Panc1 (cell line): ENCODE measurements at regions of chr18 and their contacts with region 1.

Region 1: GRCh38 chr18:25531207-25531606 is 179.2 kb upstream of the ZNF521 start:
- DNase-seq: no peak
- ATAC-seq: no peak
- H3K4me3 ChIP-seq: no peak overlapping the region
- H3K27ac ChIP-seq: no peak overlapping the region
- H3K4me1 ChIP-seq: no peaks in the 10 kb centered on the region
- H3K27me3 ChIP-seq: no peaks in the 10 kb centered on the region
- CTCF ChIP-seq: no peak

Region 2: DNA sequence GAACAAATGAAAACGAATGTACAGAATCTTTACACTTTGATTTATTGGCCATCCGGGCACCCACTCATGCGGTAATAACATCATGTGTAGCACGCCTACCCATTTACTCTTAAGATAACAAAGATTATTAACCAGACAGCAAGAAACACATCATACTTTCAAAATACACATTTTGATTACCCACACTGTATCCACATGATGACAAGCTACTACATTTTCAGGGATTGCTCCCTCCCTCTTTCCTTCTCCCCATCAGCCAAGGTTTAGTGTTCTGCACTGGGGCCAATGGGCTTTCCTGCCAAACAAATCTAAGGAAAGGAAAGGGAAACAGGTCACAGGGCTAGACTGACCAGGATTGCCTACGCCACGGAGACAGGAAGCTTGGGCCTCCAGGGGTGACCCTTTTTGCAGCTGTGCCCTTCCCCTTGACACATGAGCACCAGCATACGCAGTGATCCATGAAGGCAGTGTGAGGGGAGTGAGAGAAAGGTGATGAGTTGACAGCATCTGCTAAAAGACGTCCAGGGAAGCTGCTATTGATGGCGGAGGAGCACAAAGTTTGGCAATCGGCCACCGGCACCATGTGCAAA is 255.7 kb before region 1 on chr18:
- CTCF ChIA-PET with region 1: no interaction called
- POLR2A ChIA-PET with region 1: no interaction called
- in situ Hi-C with region 1: no loop called
- intact Hi-C with region 1: no loop called
- DNase-seq: no peak
- ATAC-seq: no peak
- H3K4me3 ChIP-seq: no peak overlapping the region
- H3K27ac ChIP-seq: no peak overlapping the region
- H3K4me1 ChIP-seq: no peaks in the 10 kb centered on the region
- H3K27me3 ChIP-seq: no peaks in the 10 kb centered on the region
- CTCF ChIP-seq: no peak

Region 3: DNA sequence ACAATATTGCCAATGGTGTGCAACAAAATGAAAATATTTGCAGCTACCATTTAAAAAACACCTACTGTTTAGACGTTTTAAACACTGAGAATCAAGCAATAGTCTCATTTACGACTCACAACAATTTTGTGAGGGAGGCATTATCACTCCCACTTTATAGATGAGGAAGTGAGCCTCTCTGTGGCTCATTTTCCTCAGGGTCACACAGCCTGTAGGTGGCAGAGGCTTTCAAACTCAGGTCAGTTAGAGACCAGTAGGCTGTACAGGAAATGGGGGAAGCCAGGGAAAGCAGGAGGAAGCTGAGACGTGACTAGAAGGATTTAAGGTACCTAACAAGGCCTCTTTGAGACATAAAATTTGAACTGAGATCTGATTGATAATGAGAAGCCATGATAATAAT is 84.2 kb before region 1 on chr18:
- CTCF ChIA-PET with region 1: no interaction called
- POLR2A ChIA-PET with region 1: no interaction called
- in situ Hi-C with region 1: no loop called
- intact Hi-C with region 1: no loop called
- DNase-seq: no peak
- ATAC-seq: no peak
- H3K4me3 ChIP-seq: no peak overlapping the region
- H3K27ac ChIP-seq: no peak overlapping the region
- H3K4me1 ChIP-seq: no peaks in the 10 kb centered on the region
- H3K27me3 ChIP-seq: no peaks in the 10 kb centered on the region
- CTCF ChIP-seq: no peak

Region 4: GRCh38 chr18:25503567-25504081 is 27.6 kb before region 1 on chr18:
- CTCF ChIA-PET with region 1: no interaction called
- POLR2A ChIA-PET with region 1: interaction called, 13 read pairs
- in situ Hi-C with region 1: no loop called
- intact Hi-C with region 1: no loop called
- DNase-seq: no peak
- ATAC-seq: peak; percentile 83; the same call in 1 of the 2 replicates
- H3K4me3 ChIP-seq: peak overlapping the region; percentile 34 to 59
- H3K27ac ChIP-seq: no peak overlapping the region
- H3K4me1 ChIP-seq: 0 out of 2 replicates have a peak, but pooled peaks cover 5% of the 10 kb centered on the region
- H3K27me3 ChIP-seq: no peaks in the 10 kb centered on the region
- CTCF ChIP-seq: no peak